GM12878 (cell line): ENCODE measurements at regions of chr11 and their contacts with region 1.

Region 1: DNA sequence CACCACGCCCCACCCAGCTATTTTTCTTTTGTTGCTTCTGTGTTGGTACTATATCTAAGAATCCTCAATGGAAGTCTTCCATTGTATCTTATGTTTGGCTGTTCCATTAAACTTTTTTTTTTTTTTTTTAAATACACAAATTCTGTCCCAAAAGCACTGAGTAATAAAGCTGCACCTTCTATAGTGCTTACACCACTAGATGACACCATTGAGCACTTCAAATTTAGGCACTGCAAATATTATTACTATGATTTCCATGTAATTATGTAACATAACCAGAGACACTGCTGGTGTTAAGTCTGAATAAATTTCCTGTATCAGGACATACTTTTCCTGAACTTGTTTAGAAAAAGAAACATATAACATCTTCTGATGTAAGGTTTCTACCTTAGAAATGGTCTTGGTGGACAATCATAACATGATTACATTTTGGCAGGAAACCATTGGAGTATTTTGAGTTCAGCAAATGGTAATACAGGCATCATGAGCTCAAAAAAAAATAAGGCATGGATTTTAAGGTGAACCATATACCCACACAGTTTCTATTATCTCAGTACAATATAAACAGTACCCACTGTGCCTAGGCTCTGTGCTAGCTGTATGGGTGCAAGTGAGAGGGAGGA is 110.5 kb downstream of the ATG16L2 start:
- DNase-seq: peak; percentile 13
- ATAC-seq: peak; percentile 65
- H3K4me3 ChIP-seq: no peak overlapping the region
- H3K27ac ChIP-seq: no peak overlapping the region
- H3K4me1 ChIP-seq: no peaks in the 10 kb centered on the region
- H3K27me3 ChIP-seq: no peaks in the 10 kb centered on the region
- CTCF ChIP-seq: peak; percentile 42 to 55 (median 43); a peak in 4 of 6 replicates
- EP300 ChIP-seq: no peak
- POLR2A ChIP-seq: no peak
- RAD21 ChIP-seq: peak; percentile 76

Region 2: GRCh38 chr11:72939031-72939430 is 14.4 kb after region 1 on chr11:
- CTCF ChIA-PET with region 1: interaction called, 15 read pairs
- POLR2A ChIA-PET with region 1: no interaction called
- RAD21 ChIA-PET with region 1: no interaction called
- SMC1A ChIA-PET with region 1: interaction called, 4 read pairs
- in situ Hi-C with region 1: no loop called
- intact Hi-C with region 1: no loop called
- DNase-seq: no peak
- ATAC-seq: no peak
- H3K4me3 ChIP-seq: no peak overlapping the region
- H3K27ac ChIP-seq: no peak overlapping the region
- H3K4me1 ChIP-seq: no peaks in the 10 kb centered on the region
- H3K27me3 ChIP-seq: no peaks in the 10 kb centered on the region
- CTCF ChIP-seq: no peak
- EP300 ChIP-seq: no peak
- POLR2A ChIP-seq: no peak
- RAD21 ChIP-seq: no peak